Naive thymus-derived CD8-positive, alpha-beta T cell (primary cell): ENCODE measurements at regions of chr19 and their contacts with region 1.

Region 1: DNA sequence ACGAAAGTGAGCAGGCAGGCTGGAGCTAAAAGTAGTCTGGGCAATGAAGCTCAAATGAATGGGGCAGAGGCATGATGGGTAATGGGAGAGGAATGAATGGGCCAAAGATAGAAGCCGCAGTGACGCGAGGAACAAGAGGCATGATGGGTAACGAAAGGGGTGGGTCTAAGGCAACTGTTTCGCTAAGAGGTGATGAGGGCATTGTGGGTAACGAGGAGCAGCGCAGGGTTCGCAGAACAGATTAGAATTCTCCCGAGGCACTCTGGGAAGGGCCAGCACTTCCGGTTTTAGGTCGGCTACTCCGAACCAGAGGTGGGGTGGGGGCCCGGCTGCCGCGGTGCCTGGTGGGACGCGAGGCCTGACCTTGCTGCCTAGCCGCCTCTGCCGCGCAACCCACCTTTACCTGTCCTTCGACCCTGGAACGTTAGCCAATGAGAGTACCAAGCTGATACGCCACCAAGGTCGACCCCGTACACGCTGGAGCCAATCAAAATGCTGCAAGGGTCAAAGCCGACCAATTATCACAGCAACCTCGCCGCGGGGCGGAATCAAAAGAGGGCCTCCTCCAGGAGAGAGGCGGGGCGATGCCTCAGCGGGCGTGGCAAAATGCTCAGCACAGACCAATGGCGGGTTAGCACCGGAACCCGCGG is 563 bp upstream of the TOMM40 start:
- DNase-seq: peak in 8 of 10 donors; percentile 98 to 100 (median 100)
- ATAC-seq: peak; percentile 82 to 84
- H3K4me3 Mint-ChIP-seq: peak overlapping the region; percentile 80 to 93 (median 90)
- H3K27ac Mint-ChIP-seq: peak overlapping the region; percentile 86 to 97 (median 96)
- H3K4me1 Mint-ChIP-seq: peaks cover 22 to 42% (median 32%) of the 10 kb centered on the region in 4 donors
- H3K27me3 Mint-ChIP-seq: no peaks in the 10 kb centered on the region

Region 2: DNA sequence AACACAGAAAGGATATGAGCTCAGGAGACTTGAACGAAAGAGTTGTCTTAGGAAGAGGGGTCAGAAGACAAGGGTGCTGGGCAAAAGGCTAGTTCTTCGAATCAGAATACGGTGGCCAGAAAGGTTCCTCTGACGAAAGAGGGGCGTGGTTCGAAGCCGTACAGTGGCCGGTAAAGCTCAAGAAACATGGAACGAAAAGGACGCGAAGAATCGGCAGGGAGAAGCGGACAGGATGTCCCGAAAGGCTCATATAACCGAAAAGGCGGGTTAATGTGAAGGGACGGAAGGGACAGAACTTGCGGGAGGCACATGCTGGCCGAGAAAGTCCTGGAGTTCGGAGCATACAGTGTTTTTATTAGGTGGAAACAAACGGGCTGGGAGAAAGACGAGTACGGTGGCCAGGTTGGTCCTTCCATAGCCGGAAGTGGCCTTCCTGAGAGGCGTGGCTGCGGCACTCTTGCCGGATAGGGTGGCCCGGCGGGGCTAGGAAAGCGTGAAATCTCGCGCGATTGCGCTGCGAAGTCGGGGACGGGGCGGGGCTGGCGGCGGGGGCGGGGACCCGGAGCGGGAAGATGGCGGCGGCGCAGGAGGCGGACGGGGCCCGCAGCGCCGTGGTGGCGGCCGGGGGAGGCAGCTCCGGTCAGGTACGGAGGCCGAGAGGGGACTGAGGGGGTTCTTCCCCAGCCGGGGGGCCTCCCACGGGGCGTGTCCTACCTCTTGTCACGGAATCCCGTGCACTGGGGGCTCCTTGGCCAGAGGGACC is 64.5 kb after region 1 on chr19 and contains the start of gene CLPTM1:
- POLR2A ChIA-PET with region 1: interaction called, 10 read pairs
- DNase-seq: peak; percentile 93 to 98 (median 96)
- ATAC-seq: peak; percentile 91 to 95
- H3K4me3 Mint-ChIP-seq: peak within 1 kb of the TSS; percentile 94 to 100 (median 97)
- H3K27ac Mint-ChIP-seq: peak within 1 kb of the TSS; percentile 94 to 99 (median 98)
- H3K4me1 Mint-ChIP-seq: peaks cover 27 to 60% (median 48%) of the 10 kb centered on the region in 4 donors
- H3K27me3 Mint-ChIP-seq: no peaks in the 10 kb centered on the region
- polyA plus RNA-seq, gene CLPTM1: 13.2 to 20.6 (median 14.9) TPM

Region 3: GRCh38 chr19:44988896-44989556 is 98.5 kb after region 1 on chr19:
- POLR2A ChIA-PET with region 1: no interaction called
- DNase-seq: peak; percentile 42 to 74 (median 52)
- ATAC-seq: peak; percentile 82 to 83
- H3K4me3 Mint-ChIP-seq: no peak overlapping the region
- H3K27ac Mint-ChIP-seq: peak overlapping the region in 5 of 10 donors; percentile 3 to 75 (median 42)
- H3K4me1 Mint-ChIP-seq: peaks cover 0 to 8% (median 0%) of the 10 kb centered on the region in 4 donors
- H3K27me3 Mint-ChIP-seq: no peaks in the 10 kb centered on the region

Region 4: GRCh38 chr19:45008552-45008951 is 118.1 kb after region 1 on chr19:
- POLR2A ChIA-PET with region 1: no interaction called
- DNase-seq: no peak
- ATAC-seq: peak in 1 of 2 donors; percentile 13
- H3K4me3 Mint-ChIP-seq: no peak overlapping the region
- H3K27ac Mint-ChIP-seq: peak overlapping the region in 1 of 10 donors; percentile 32
- H3K4me1 Mint-ChIP-seq: peaks cover 0 to 13% (median 3%) of the 10 kb centered on the region in 4 donors
- H3K27me3 Mint-ChIP-seq: no peaks in the 10 kb centered on the region